ENCODE measurements at regions of chr9 and their contacts with region 1.

Region 1: DNA sequence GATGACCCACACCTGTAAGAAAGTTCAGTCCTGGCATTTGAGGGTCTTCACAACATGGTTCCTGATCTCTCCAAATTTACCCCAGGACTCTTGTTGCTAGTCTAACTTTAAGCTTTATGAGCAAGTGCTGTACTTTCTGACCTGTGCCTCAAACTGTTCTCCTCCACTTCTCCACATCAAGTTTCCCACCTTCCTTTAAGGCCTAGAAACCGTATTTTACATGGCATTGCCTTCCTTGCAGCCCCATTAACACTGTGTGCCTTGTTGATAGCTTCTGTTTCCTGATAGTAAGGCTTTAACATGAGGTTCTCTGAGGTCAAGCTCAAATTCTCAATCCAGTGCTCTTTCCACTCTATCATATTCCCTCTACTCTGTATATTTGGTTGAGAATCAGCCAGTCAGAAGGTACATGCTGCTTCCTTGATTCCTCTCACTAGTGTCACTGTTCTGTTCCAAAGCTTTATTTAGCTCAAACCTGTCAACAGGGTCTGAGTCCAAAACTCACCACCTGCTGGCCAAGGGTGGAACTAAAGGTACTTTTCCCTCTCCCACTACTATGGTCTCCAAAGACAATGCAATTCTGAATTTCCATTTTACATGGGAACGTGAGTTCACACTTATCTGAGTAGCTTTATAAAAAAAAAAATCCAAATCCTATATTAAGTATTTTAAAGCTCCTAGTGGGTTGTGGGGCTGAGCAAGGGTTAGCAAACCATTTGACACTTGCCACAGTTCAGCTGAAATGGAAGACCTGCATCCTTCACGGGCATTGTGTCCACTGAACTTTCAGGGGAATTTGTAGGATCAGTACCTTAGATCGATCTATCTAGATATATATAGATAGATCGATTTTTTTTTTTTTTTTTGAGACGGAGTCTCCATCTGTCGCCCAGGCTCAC is 21.1 kb downstream of the VCP start:
- DNase-seq: peak; percentile 61
- CTCF ChIP-seq: peak; percentile 65

Region 2: DNA sequence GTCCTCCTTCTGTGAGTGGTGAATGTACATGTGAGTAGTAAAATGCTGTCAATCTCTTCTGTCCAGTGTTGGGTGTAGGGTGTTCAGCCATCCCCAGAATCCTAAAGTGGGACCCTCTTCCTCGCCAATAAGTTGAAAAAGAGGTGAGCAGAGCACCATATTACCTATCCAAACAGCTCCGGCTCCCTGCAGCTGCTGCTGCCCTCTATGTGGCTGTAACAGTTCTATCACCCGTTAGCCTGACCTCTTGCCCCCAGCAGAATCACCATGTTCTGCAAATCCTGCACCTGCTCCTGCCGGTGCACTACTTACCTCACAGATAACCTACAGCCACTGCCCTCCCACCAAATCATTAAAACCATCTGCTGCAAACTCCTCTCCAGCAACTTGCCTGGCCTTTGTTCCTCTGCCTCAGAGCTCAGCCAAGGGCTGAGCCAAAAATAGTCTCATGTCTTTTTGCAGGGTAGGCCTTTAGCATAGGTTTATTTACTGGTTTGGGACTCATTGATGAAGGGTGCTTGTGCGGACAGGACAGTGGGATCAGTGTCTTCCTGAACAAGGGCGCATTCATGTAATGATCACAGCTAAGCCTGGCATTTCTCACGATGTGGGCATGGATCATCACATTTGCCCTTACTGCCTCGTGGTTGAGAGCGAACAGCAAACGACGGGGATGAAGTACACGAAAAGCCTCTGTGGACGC is 291.7 kb before region 1 on chr9:
- CTCF ChIA-PET with region 1: interaction called, 12 read pairs
- POLR2A ChIA-PET with region 1: no interaction called
- DNase-seq: no peak
- CTCF ChIP-seq: no peak

Region 3: GRCh38 chr9:35001803-35002502 is 49.4 kb before region 1 on chr9:
- CTCF ChIA-PET with region 1: interaction called, 20 read pairs
- POLR2A ChIA-PET with region 1: no interaction called
- DNase-seq: peak; percentile 24
- CTCF ChIP-seq: no peak

Region 4: GRCh38 chr9:35071814-35072460 is 20.6 kb after region 1 on chr9:
- CTCF ChIA-PET with region 1: interaction called, 72 read pairs
- POLR2A ChIA-PET with region 1: interaction called, 3 read pairs
- DNase-seq: peak; percentile 85
- CTCF ChIP-seq: peak; percentile 41

Region 5: GRCh38 chr9:35096035-35096849 is 44.9 kb after region 1 on chr9 and contains the start of gene PIGO:
- CTCF ChIA-PET with region 1: interaction called, 16 read pairs
- POLR2A ChIA-PET with region 1: no interaction called
- DNase-seq: peak; percentile 89
- CTCF ChIP-seq: peak; percentile 96